Activated B cell treated with CpG ODN at 0.5 μM for 24 hours (primary cell): ENCODE measurements at regions of chr5 and their contacts with region 1.

Region 1: GRCh38 chr5:54854883-54855581 is 130.4 kb downstream of the ESM1 start:
- DNase-seq: no peak
- ATAC-seq: no peak
- H3K4me3 Mint-ChIP-seq: no peak overlapping the region
- H3K27ac Mint-ChIP-seq: no peak overlapping the region
- H3K4me1 Mint-ChIP-seq: no peaks in the 10 kb centered on the region
- H3K27me3 Mint-ChIP-seq: peaks cover 21% of the 10 kb centered on the region
- CTCF ChIP-seq: no peak

Region 2: DNA sequence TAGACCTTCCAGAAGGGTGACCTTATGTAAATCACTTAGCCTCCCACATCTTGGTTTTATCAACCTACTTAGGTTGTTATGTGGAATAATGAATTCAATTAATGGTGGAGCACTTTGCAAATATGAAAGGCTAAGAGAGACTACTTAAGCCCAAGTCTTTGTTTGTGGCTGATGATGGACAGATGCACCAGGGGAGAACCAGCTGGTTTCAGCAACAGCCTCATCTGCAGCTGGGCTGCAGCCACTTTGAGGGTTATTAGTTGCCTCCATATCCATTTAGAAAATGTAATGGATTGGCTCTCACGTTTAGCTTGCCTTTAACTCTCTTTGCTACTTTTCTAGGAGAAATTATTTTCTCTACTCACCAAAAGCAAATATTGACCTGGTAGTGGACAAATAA is 16.2 kb before region 1 on chr5:
- CTCF ChIA-PET with region 1: no interaction called
- POLR2A ChIA-PET with region 1: no interaction called
- intact Hi-C with region 1: no loop called
- DNase-seq: no peak
- ATAC-seq: no peak
- H3K4me3 Mint-ChIP-seq: no peak overlapping the region
- H3K27ac Mint-ChIP-seq: no peak overlapping the region
- H3K4me1 Mint-ChIP-seq: peaks cover 27% of the 10 kb centered on the region
- H3K27me3 Mint-ChIP-seq: no peaks in the 10 kb centered on the region
- CTCF ChIP-seq: no peak

Region 3: GRCh38 chr5:54867310-54867944 is 12.4 kb after region 1 on chr5:
- CTCF ChIA-PET with region 1: interaction called, 12 read pairs
- POLR2A ChIA-PET with region 1: no interaction called
- intact Hi-C with region 1: no loop called
- DNase-seq: no peak
- ATAC-seq: peak; percentile 77
- H3K4me3 Mint-ChIP-seq: peak overlapping the region; percentile 53
- H3K27ac Mint-ChIP-seq: no peak overlapping the region
- H3K4me1 Mint-ChIP-seq: peaks cover 4% of the 10 kb centered on the region
- H3K27me3 Mint-ChIP-seq: peaks cover 29% of the 10 kb centered on the region
- CTCF ChIP-seq: no peak